ENCODE measurements at regions of chr20 and their contacts with region 1.

Region 1: GRCh38 chr20:31943052-31943471 is 8.8 kb downstream of the PDRG1 start:
- DNase-seq: no peak
- H3K4me3 ChIP-seq: no peak overlapping the region
- H3K27ac ChIP-seq: no peak overlapping the region
- H3K27me3 ChIP-seq: no peaks in the 10 kb centered on the region
- CTCF ChIP-seq: no peak

Region 2: GRCh38 chr20:31909253-31910070 is 33.6 kb before region 1 on chr20:
- CTCF ChIA-PET with region 1: interaction called, 4 read pairs
- POLR2A ChIA-PET with region 1: interaction called, 14 read pairs
- DNase-seq: no peak
- H3K4me3 ChIP-seq: no peak overlapping the region
- H3K27ac ChIP-seq: no peak overlapping the region
- H3K27me3 ChIP-seq: peaks cover 22% of the 10 kb centered on the region
- CTCF ChIP-seq: no peak

Region 3: DNA sequence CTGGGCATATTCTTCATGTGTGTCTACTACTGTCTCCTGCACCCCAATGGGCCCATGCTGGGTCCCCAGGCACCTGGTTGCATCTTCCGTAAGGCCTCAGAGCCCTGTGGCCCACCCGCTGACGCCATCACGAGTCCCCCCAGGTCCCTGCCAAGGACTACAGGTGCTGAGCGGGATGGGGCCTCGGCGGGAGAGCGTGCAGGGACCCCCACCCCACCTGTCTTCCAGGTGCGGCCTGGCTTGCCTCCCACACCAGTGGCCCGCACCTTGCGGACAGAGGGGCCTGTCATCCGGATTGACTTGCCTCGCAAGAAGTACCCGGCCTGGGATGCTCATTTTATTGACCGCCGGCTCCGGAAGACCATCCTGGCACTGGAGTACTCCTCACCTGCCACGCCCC is 53.9 kb after region 1 on chr20:
- CTCF ChIA-PET with region 1: no interaction called
- POLR2A ChIA-PET with region 1: no interaction called
- DNase-seq: no peak
- H3K4me3 ChIP-seq: no peak overlapping the region
- H3K27ac ChIP-seq: no peak overlapping the region
- H3K27me3 ChIP-seq: peaks cover 43% of the 10 kb centered on the region
- CTCF ChIP-seq: no peak

Region 4: DNA sequence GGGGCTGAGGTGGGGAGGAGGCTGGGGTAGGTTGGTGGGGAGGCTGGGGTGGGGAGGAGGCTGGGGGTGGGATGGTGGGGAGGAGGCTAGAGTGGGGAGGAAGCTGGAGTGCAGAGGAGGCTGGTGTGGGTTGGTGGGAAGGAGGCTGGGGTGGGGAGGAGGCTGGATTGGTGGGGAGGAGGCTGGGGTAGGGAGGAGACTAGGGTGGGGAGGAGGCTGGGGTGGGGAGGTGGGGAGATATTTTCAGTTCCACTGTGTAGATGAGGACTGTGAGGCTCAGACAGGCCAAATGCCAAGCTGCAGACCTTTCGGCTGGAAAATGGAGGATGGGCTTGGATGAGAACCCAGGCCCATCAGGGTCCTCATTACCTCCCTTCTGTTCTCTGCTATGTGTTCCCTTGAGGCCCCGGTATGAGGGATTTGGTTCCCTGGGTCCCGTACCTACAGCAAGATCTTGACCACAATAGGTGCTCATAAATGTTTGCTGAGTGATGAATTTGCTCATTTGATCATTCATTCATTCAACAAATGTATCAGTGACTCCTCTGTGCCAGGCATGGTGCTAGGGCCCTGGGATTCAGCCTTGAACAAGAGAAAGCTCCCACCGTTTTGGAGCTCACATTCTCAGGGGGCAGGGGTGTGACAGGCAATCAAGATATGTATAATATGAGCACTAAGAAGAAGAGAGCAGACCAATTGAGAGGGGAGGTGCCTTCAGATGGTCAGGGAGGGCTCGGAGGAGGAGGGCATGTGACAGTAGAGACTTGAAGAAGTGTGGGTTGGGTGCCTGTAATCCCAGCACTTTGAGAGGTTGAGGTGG is 678.2 kb after region 1 on chr20:
- CTCF ChIA-PET with region 1: no interaction called
- POLR2A ChIA-PET with region 1: no interaction called
- DNase-seq: no peak
- H3K4me3 ChIP-seq: no peak overlapping the region
- H3K27ac ChIP-seq: no peak overlapping the region
- H3K27me3 ChIP-seq: peaks cover 34% of the 10 kb centered on the region
- CTCF ChIP-seq: no peak

Measured in AG04450 (cell line).